ENCODE measurements at regions of chr16 and their contacts with region 1.

Region 1: DNA sequence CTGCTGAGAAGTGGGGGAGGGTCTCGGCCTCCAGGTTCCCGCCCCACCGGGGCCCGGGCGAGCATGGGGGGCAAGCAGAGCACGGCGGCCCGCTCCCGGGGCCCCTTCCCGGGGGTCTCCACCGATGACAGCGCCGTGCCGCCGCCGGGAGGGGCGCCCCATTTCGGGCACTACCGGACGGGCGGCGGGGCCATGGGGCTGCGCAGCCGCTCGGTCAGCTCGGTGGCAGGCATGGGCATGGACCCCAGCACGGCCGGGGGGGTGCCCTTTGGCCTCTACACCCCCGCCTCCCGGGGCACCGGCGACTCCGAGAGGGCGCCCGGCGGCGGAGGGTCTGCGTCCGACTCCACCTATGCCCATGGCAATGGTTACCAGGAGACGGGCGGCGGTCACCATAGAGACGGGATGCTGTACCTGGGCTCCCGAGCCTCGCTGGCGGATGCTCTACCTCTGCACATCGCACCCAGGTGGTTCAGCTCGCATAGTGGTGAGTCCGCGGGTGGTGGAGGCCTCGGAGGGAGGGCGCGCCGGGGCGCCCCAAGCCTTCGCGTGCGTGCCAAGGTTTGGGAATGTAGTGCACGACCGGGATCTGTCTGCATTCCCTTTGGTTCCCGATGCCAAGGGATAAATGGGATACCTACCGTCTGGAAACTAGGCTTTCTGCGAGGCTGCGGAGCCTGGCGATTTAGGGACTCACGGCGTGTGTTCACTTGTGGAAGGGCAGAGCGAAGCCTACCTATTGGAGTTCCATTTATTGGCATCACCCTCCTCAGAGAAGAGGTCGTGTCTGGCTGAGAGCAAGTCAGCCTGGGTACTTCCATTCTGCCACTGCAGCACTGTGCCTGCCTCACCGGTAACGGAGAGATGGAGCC is 1.0 kb downstream of the ZNRF1 start:
- DNase-seq: peak in 1 of 2 experiments; percentile 54
- H3K4me3 ChIP-seq: peak overlapping the region; percentile 62
- H3K4me1 ChIP-seq: peaks cover 11% of the 10 kb centered on the region
- H3K27me3 ChIP-seq: no peaks in the 10 kb centered on the region

Region 2: GRCh38 chr16:74813109-74813641 is 186.7 kb before region 1 on chr16:
- in situ Hi-C with region 1: no loop called
- DNase-seq: peak; percentile 84 to 93
- H3K4me3 ChIP-seq: no peak overlapping the region
- H3K4me1 ChIP-seq: peaks cover 3% of the 10 kb centered on the region
- H3K27me3 ChIP-seq: no peaks in the 10 kb centered on the region

Region 3: DNA sequence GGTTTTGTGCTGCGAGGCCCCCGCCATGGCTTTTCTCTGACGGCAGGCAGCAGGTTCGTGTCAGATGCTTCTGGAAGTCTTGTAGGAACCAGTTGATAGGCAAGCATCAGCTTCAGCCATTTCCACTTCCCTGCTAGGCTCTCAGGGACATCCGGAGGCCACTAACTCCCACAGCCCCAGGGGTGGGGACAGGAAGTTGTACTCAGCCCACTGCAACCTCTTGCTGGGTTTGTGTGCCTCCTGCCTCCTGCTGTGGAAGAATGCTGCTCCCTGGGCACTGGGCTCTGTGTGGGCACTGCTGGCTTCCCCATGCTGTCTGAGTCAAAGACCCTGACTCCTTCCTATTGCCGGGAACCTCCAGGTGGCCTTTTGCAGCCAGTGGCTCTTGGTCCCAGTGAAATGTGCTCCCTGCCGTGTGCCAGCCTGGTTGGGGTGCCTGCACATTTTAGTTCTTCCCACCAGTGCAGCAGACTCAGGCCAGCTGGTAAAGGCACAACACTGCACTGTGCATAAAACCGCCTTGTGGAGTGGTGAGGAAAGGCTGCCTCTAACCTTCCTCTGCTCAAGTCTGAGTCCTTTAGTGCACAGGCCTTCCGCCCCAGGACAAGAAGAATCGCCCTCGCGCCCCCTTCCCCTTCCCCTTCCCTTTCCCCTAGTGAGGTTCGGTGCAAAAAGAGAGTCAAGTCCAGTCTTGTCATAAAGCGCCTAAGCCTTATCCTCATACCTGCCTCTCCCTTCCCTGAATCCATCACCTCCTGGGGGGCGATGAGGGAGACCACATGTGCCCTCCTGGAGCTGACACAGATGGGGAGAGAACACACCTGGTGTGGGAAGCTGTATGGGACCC is 100.1 kb after region 1 on chr16:
- in situ Hi-C with region 1: loop called (anchors 5 kb)
- DNase-seq: no peak
- H3K4me3 ChIP-seq: no peak overlapping the region
- H3K4me1 ChIP-seq: no peaks in the 10 kb centered on the region
- H3K27me3 ChIP-seq: no peaks in the 10 kb centered on the region

Region 4: DNA sequence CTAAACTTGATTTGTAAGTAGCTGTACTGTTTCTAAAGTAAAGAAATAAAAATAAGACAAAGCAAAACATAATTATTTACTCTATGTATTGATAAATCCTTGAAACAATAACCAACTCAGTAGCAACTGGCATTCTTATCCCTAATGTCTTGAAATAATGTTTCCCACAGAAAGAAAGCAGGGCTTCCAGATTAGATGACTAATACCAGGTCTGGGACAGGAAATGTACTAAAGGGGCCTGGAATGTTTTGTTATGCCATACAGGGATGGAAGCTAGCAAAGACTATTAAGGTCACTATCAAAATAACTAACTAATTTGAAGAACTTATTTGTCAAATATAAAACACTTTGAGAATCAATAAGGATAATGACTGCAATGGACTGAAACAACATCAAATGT is 351.3 kb after region 1 on chr16:
- in situ Hi-C with region 1: no loop called
- DNase-seq: no peak
- H3K4me3 ChIP-seq: no peak overlapping the region
- H3K4me1 ChIP-seq: no peaks in the 10 kb centered on the region
- H3K27me3 ChIP-seq: no peaks in the 10 kb centered on the region

Measured in HAP-1 (cell line).